GM23248 (cell line): ENCODE measurements at regions of chr21 and their contacts with region 1.

Region 1: DNA sequence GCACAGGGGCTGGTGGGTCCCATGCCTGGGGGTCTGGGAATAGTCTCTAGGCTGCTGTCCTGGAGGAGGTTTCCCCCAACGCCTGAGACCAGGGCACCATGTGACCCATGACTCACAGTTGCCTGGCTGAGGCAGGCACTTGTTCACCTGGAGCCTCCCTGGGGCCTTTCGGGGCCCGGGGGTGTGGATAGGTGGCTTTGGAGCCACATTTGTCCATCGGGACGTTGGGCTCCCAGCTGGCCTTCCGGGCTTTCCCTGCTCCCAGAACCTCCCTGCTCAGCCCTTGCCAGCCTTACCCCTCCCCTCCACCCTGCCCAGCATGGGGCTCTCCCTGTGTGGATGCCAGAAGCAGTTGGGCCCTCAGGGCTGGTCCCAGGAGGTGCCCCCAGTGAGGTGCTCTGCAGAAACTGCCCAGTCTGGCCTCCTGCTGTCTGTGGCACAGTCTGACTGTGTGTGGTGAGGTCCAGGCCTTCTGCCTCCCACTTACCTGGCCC is 14.2 kb downstream of the COL6A1 start:
- DNase-seq: peak; percentile 54
- H3K4me3 ChIP-seq: no peak overlapping the region
- H3K27ac ChIP-seq: no peak overlapping the region
- H3K4me1 ChIP-seq: no peaks in the 10 kb centered on the region
- H3K27me3 ChIP-seq: no peaks in the 10 kb centered on the region

Region 2: GRCh38 chr21:46110499-46111192 is 114.9 kb after region 1 on chr21:
- in situ Hi-C with region 1: loop called (anchors 10 kb)
- DNase-seq: peak; percentile 62
- H3K4me3 ChIP-seq: no peak overlapping the region
- H3K27ac ChIP-seq: peak overlapping the region; percentile 14; the same call in 1 of the 2 replicates
- H3K4me1 ChIP-seq: peaks cover 7% of the 10 kb centered on the region; the same call in 1 of the 2 replicates
- H3K27me3 ChIP-seq: no peaks in the 10 kb centered on the region